ENCODE measurements at regions of chr5 and their contacts with region 1.

Region 1: GRCh38 chr5:16934123-16934522 is 2.0 kb downstream of the MYO10 start:
- DNase-seq: peak; percentile 90
- H3K4me3 ChIP-seq: peak overlapping the region; percentile 76
- H3K27ac ChIP-seq: no peak overlapping the region
- H3K4me1 ChIP-seq: no peaks in the 10 kb centered on the region
- H3K27me3 ChIP-seq: no peaks in the 10 kb centered on the region
- CTCF ChIP-seq: peak; percentile 86

Region 2: GRCh38 chr5:16791036-16791705 is 143.0 kb before region 1 on chr5:
- intact Hi-C with region 1: loop called (anchors 10 kb)
- DNase-seq: peak; percentile 57
- H3K4me3 ChIP-seq: no peak overlapping the region
- H3K27ac ChIP-seq: no peak overlapping the region
- H3K4me1 ChIP-seq: no peaks in the 10 kb centered on the region
- H3K27me3 ChIP-seq: no peaks in the 10 kb centered on the region
- CTCF ChIP-seq: peak; percentile 58

Region 3: GRCh38 chr5:16842896-16843295 is 91.2 kb before region 1 on chr5:
- intact Hi-C with region 1: loop called (anchors 10 kb)
- DNase-seq: no peak
- H3K4me3 ChIP-seq: no peak overlapping the region
- H3K27ac ChIP-seq: no peak overlapping the region
- H3K4me1 ChIP-seq: no peaks in the 10 kb centered on the region
- H3K27me3 ChIP-seq: no peaks in the 10 kb centered on the region
- CTCF ChIP-seq: no peak

Region 4: DNA sequence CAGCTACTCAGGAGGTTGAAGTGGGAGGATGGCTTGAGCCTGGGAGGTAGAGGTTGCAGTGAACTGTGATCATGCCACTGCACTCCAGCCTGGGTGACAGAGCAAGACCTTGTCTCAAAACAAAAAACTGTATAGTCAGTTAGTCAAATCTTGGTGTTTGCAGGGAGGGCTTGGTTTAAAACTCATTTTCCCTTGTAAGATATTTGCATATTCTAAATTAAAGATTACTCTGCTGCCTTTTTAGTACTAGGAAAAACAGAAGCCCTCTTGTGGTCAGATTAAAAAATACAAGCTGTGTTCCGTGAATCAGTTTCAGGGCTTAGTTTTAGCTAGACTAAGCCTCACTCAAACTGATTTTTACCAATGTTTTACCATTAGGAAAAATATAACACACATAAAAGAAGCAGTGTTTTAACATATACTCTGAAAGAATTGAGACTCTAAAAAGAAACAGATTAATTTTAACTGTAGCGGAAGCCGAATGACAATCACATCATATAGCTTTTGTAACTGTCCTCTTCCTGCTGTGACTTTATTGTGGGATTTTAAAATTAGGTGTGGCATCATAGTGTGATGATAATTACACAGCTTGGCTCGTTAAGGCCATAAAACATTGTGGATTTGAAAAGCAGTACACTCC is 198.4 kb after region 1 on chr5:
- intact Hi-C with region 1: loop called (anchors 5 kb)
- DNase-seq: no peak
- H3K4me3 ChIP-seq: no peak overlapping the region
- H3K27ac ChIP-seq: peak overlapping the region; percentile 58
- H3K4me1 ChIP-seq: no peaks in the 10 kb centered on the region
- H3K27me3 ChIP-seq: no peaks in the 10 kb centered on the region
- CTCF ChIP-seq: peak; percentile 82

Region 5: GRCh38 chr5:17189381-17190036 is 255.4 kb after region 1 on chr5:
- intact Hi-C with region 1: loop called (anchors 5 kb)
- DNase-seq: peak; percentile 90
- H3K4me3 ChIP-seq: no peak overlapping the region
- H3K27ac ChIP-seq: no peak overlapping the region
- H3K4me1 ChIP-seq: no peaks in the 10 kb centered on the region
- H3K27me3 ChIP-seq: no peaks in the 10 kb centered on the region
- CTCF ChIP-seq: peak; percentile 88